Sigmoid colon (tissue), 7 donors: ENCODE measurements at regions of chr3 and their contacts with region 1.

Region 1: DNA sequence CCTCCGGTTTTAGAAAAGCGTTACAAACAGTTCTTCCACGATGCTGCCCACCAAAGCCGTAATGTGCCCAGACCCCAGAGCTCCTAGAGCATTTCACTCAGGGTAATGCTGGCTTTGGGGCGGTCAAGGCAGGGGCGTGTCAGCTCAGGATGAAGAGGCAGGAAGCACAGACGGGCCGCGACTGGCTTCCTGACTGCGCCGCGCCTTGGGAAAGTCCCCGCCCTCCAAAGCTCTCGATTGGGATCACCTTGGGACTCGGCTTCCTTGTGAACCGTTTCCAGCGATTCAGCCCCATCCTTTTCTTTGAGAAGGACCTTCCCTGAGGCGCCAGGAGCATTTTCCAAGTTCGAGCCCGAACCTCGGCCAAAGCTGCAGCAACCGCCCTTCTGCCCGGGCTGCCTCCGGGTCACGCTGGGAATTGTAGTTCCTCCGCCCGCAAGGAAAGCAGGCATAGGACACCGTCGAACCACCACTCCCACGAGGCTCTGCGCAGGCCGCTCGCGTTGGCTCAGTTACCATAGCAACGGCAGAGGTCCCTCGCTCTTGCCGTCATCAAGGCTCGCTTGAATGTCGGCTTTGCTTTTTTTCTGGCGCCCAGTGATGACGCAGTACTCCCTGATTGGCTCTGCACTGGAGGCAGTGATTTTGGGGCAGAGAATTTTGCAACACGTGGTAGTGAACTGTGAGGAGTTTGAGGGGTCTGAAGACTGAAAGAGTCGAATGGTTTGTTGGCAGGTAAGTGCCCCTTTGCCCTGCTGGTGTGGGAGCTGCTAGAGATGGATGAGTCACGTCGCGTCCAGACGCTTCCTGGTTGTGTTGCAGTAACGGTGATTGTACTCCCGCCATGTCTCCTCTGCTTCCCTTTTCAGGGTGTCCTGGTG is at the starts of genes CCDC191 and QTRT2:
- DNase-seq: peak; percentile 99
- H3K4me3 ChIP-seq: peak within 1 kb of the TSS; percentile 67 to 76 (median 72)
- H3K27ac ChIP-seq: peak within 1 kb of the TSS; percentile 82 to 86 (median 85)
- H3K4me1 ChIP-seq: peaks cover 0 to 30% (median 19%) of the 10 kb centered on the region in 4 donors
- H3K27me3 ChIP-seq: no peaks in the 10 kb centered on the region
- CTCF ChIP-seq: no peak
- EP300 ChIP-seq: peak in 1 of 4 donors; percentile 81
- POLR2A ChIP-seq: no peak
- total RNA-seq, gene CCDC191: 3.2 to 5.5 (median 4.7) TPM
- total RNA-seq, gene QTRT2: 8.0 to 17.5 (median 12.4) TPM

Region 2: DNA sequence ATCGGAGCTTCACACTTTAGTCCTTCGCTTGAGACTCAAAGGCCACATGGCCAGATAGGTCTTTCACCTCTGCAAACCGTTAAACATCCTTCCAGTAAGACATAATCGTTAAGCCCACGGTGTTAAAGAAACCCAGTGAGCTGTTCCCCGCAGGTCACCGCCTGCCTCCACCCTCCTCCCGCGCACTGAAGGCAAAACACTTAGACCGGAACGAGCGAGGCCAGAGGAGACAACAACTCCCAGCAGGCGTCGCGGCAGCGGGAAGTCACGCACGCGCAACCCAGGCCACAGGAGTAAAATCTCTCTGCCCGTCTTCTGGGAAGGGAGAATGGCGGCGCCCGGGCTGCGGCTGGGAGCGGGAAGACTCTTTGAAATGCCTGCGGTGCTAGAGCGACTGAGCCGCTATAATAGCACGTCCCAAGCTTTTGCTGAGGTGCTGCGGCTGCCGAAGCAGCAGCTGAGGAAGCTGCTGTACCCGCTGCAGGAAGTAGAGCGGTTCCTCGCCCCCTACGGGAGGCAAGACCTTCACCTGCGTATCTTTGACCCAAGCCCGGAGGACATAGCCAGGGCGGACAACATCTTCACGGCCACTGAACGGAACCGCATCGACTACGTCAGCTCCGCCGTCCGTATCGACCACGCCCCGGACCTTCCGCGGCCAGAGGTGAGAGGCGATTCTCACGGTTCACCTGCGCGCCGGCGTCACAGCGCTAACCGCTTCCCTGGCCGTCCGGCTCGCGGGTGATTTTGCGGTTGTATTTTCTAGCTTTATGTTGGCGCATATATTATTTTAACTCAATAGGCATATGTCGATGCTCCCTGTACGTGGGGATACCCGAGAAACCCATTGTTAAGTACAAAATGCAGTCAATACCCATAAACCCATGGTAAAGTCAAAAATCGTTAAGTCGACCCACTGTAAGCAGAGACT is 1065.4 kb before region 1 on chr3 and contains the start of gene GTPBP8:
- intact Hi-C with region 1: loop called (anchors 10 kb)
- DNase-seq: peak; percentile 96
- H3K4me3 ChIP-seq: peak within 1 kb of the TSS; percentile 81 to 94 (median 88)
- H3K27ac ChIP-seq: peak within 1 kb of the TSS; percentile 95 to 96 (median 95)
- H3K4me1 ChIP-seq: peaks cover 0 to 20% (median 15%) of the 10 kb centered on the region in 4 donors
- H3K27me3 ChIP-seq: no peaks in the 10 kb centered on the region
- CTCF ChIP-seq: no peak
- EP300 ChIP-seq: peak in 1 of 4 donors; percentile 4
- POLR2A ChIP-seq: peak; percentile 93 to 94
- total RNA-seq, gene GTPBP8: 20.4 to 38.2 (median 32.8) TPM

Region 3: DNA sequence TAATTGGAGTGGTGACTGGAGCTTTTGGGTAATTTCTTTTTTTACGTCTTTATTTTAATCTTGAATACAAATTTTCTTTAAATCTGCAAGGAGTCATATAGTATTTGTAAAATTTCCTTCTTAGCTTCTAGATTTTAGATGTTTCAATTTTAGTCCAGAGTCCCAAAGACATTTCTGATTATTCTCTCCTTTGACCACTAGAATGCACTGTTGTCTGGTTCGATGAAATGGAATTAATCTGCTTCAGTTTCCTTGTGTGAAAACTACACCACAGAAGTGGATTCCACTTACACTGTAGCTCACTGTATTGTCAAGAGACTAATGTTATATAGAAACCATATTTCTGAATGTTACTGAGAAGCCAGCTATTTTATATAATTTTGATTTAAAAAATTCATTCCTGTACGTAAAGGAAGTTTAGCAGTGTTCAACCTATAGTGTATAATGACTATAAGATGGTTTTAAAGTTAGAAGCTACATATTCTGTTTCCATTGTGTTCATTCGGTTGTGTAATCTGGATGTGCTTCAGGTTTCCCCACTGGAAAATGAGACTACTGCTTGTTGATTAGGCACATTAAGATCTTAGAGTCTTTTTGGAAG is 211.6 kb before region 1 on chr3:
- intact Hi-C with region 1: loop called (anchors 10 kb)
- DNase-seq: no peak
- H3K4me3 ChIP-seq: no peak overlapping the region
- H3K27ac ChIP-seq: no peak overlapping the region
- H3K4me1 ChIP-seq: no peaks in the 10 kb centered on the region
- H3K27me3 ChIP-seq: no peaks in the 10 kb centered on the region
- CTCF ChIP-seq: peak in 3 of 4 experiments; percentile 21 to 33 (median 32)
- EP300 ChIP-seq: no peak
- POLR2A ChIP-seq: no peak

Region 4: DNA sequence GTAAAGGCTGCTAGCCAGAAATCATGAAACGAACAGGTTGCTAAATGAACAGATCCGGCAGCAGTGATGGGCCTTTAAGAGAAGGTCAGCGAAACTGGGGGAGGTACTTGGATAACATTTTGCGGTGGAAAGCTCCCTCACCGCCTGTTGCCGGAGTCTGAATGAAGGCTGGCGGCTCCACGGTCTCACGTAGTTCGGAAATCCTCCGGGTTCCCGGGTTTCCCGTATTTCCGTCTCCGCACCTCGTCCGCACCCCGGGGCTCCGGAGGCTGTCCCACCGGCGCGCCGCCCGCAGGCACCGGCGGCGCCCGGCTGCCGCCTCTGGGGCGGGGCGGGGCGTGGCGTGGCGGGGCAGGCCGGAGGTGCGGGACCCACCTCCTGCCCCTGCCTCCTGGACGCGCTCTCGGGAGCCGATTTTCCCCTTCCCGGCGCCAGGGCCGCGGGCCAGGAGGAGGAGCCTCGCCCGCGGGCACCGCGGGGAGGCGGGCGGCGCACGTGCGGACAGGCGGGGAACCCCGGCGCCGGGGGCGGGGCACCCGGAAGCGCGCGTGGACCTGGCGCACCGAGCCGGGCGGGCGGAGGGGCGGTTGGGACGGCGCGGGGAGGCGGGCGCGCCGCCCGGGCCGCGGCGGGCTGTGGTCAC is 108.9 kb before region 1 on chr3 and contains the start of gene ZDHHC23:
- intact Hi-C with region 1: loop called (anchors 5 kb)
- DNase-seq: peak; percentile 84
- H3K4me3 ChIP-seq: peak within 1 kb of the TSS; percentile 58 to 82 (median 68)
- H3K27ac ChIP-seq: peak within 1 kb of the TSS; percentile 40 to 63 (median 61)
- H3K4me1 ChIP-seq: peaks cover 0 to 11% (median 9%) of the 10 kb centered on the region in 4 donors
- H3K27me3 ChIP-seq: no peaks in the 10 kb centered on the region
- CTCF ChIP-seq: no peak
- EP300 ChIP-seq: no peak
- POLR2A ChIP-seq: no peak
- total RNA-seq, gene ZDHHC23: 1.1 to 1.4 (median 1.3) TPM

Region 5: GRCh38 chr3:115147329-115148141 is 1091.2 kb after region 1 on chr3:
- intact Hi-C with region 1: loop called (anchors 2 kb)
- DNase-seq: peak; percentile 100
- H3K4me3 ChIP-seq: peak overlapping the region; percentile 84 to 94 (median 92)
- H3K27ac ChIP-seq: peak overlapping the region; percentile 98 to 99 (median 99)
- H3K4me1 ChIP-seq: peaks cover 0 to 29% (median 19%) of the 10 kb centered on the region in 4 donors
- H3K27me3 ChIP-seq: no peaks in the 10 kb centered on the region
- CTCF ChIP-seq: no peak
- EP300 ChIP-seq: peak in 1 of 4 donors; percentile 22
- POLR2A ChIP-seq: peak; percentile 76 to 87